ENCODE measurements at regions of chr19 and their contacts with region 1.

Region 1: DNA sequence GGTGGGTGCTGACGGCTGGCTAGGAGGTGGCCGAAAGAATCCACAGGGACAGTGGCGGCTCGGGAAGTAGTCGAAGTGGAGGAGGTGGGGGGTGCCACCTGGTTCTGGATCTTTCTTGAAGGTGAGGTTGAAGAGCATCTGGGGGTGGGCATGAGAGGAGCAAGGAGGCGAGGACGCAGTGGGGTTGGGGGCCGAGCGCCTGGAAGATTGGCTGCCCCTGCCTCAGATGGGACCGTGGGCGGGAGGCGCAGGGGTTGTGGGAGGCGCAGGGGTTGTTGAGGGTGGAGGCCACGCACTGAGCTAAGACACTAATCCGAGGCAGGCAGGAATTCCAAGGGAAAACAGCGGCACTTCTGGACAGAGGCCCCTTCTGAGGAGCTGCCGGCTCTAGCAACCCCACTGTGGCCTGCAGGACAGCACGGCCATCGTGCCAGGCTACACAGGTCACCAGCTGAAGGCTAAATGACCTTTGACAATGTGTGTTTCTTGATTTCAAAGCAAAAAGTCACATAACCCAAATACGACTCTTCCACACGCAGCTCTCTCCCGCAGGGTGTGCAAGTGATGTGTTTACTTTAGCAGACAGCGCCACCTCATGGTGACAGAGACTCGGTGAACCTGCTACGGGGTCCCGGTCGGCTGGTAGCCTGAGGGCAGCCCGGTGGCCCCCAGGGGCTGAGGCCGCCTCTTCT is 44.1 kb upstream of the RANBP3 start:
- DNase-seq: peak in 3 of 4 donors; percentile 54 to 86 (median 82)
- ATAC-seq: peak; percentile 82
- H3K4me3 ChIP-seq: no peak overlapping the region
- H3K27ac ChIP-seq: no peak overlapping the region
- H3K4me1 ChIP-seq: peaks cover 0 to 13% of the 10 kb centered on the region in 2 donors
- H3K27me3 ChIP-seq: no peaks in the 10 kb centered on the region
- CTCF ChIP-seq: peak; percentile 56 to 77

Region 2: DNA sequence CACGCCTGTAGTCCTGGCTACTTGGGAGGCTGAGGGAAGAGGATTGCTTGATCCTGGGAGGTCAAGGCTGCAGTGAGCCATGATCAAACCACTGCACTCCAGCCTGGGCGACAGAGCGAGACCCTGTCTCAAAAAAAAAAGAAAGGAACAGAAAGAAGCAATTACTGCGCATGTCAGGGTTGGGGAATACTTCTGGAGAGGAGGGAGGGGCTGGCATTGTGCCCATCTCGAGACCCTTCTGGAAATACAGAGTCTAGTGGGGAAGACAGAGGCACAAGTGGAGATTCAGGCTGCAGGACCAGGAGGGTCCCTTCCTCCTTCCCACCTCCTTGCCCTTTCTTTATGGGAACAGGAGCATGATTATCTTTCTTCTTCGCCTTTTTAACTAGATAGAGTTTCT is 268.3 kb before region 1 on chr19:
- intact Hi-C with region 1: no loop called
- DNase-seq: no peak
- ATAC-seq: no peak
- H3K4me3 ChIP-seq: no peak overlapping the region
- H3K27ac ChIP-seq: no peak overlapping the region
- H3K4me1 ChIP-seq: no peaks in the 10 kb centered on the region
- H3K27me3 ChIP-seq: peaks cover 0 to 30% of the 10 kb centered on the region in 2 donors
- CTCF ChIP-seq: no peak

Region 3: DNA sequence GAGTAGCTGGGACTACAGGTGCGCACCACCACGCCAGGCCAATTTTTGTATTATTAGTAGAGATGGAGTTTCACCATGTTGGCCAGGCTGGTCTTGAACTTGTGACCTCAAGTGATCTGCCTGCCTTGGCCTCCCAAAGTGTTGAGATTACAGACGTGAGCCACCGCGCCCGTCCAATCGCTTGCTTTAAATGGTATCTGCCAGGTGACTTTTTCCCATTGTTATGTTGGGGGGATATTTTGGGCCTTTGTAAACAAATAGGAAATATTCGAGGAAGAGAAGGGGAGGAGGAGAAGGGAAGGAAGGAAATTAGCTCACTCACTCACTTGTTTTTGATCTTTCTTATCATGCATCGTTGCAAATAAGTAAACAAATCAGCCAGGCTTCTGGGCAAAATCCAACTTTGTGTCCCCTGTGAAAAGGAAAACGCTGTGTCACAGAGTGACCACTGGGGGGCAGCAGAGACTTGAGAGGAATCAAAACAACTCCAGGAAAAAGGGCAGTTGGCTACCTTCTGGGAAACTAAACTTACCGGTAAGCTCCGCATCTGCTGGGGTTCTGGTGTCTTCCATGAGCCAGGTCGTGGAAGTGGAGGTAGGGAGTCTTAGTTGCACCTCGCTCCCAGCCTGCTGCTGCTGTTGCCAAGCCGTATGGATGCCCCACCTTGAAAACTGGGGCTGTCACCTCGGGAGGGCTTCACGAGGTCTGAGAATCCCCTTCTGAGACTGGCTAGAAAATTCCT is 34.8 kb before region 1 on chr19:
- intact Hi-C with region 1: loop called in 1 of 2 experiments (anchors 2 kb)
- DNase-seq: peak in 3 of 4 donors; percentile 74 to 90 (median 79)
- ATAC-seq: peak; percentile 89
- H3K4me3 ChIP-seq: peak overlapping the region in 1 of 2 donors; percentile 22
- H3K27ac ChIP-seq: no peak overlapping the region
- H3K4me1 ChIP-seq: peaks cover 7 to 17% of the 10 kb centered on the region in 2 donors
- H3K27me3 ChIP-seq: no peaks in the 10 kb centered on the region
- CTCF ChIP-seq: peak; percentile 89 to 96

Region 4: DNA sequence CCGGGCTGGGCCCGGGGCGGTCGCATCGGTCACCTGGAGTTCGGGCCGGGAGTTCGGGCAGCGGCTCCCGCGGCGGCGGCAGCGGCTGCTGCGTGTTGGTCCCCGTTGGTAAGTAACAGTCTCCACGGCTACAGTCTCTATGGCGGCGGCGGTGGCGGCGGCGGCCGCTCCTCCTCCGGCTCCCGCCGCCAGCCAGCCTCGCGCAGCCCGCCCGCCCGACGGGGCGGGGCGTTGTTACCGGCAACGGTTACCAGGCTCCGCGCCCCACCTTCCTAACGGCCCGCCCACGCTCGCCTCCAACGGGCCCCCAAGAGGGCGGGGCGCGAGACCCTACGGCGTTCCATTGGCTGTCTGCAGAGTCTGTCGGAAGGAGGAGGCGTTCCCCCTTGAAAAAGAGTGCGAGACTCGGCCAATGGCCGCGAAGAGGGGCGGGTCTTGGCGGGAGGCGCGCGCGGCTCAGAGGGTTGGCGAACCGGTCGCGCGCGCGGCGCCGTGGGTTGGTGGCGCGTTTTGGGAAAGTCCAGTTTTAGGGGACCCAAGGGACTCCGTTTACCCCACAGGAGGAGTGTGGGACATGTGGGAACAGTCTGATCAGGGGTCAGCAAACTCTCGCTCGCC is 88.4 kb after region 1 on chr19 and contains the start of gene RFX2:
- intact Hi-C with region 1: no loop called
- DNase-seq: peak; percentile 98 to 100 (median 100)
- ATAC-seq: peak; percentile 98
- H3K4me3 ChIP-seq: peak within 1 kb of the TSS; percentile 59 to 62
- H3K27ac ChIP-seq: peak within 1 kb of the TSS; percentile 80 to 91
- H3K4me1 ChIP-seq: peaks cover 3 to 31% of the 10 kb centered on the region in 2 donors
- H3K27me3 ChIP-seq: no peaks in the 10 kb centered on the region
- CTCF ChIP-seq: no peak
- polyA plus RNA-seq, gene RFX2: 12.7 to 17.4 (median 15.3) TPM